ENCODE measurements at regions of chr13 and their contacts with region 1.

Region 1: DNA sequence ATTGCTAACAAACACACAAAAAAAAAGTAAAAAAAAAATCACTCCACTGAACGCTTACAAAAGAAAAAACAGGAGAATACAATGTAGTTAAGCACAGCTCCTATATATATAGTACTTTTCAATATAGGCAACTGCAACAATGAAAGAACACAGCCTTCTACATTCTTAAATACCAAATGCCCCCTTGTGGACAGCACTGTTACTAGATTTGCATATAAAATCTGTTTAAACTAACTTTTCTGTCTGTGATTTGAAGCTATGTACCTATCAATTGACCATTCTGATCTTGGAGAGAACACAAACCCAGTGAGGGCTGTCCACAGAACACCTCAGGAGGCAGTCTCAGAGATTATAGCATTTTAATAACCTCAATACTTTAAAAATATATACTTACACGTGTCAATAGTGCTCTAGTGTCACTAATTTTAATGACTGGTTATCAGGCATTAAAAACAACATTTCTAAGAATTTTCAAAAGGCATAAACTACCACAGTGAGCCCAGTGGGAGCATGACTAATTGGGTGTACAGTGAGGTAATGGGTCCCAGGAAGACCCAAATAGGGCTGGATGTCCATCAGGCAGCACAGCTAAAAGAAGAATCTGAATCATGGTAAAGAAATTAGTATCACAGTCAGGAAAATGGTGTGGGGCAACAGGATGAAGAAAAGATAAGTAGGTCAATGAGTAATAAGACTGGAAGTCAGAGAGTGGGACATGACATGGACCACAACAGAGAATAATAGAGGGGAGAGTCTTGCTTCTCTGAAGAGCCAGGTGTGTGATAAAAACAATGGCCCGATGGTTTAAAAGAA is 22.2 kb downstream of the CCDC169 start:
- DNase-seq: no peak
- ATAC-seq: peak; percentile 64
- H3K4me3 ChIP-seq: no peak overlapping the region
- H3K27ac ChIP-seq: no peak overlapping the region
- H3K4me1 ChIP-seq: no peaks in the 10 kb centered on the region
- H3K27me3 ChIP-seq: no peaks in the 10 kb centered on the region
- CTCF ChIP-seq: peak; percentile 61

Region 2: GRCh38 chr13:35978603-35979316 is 296.6 kb before region 1 on chr13:
- intact Hi-C with region 1: loop called (anchors 5 kb)
- DNase-seq: no peak
- ATAC-seq: peak; percentile 67
- H3K4me3 ChIP-seq: no peak overlapping the region
- H3K27ac ChIP-seq: no peak overlapping the region
- H3K4me1 ChIP-seq: no peaks in the 10 kb centered on the region
- H3K27me3 ChIP-seq: no peaks in the 10 kb centered on the region
- CTCF ChIP-seq: peak; percentile 79